ENCODE measurements at regions of chr1 and their contacts with region 1.

Region 1: DNA sequence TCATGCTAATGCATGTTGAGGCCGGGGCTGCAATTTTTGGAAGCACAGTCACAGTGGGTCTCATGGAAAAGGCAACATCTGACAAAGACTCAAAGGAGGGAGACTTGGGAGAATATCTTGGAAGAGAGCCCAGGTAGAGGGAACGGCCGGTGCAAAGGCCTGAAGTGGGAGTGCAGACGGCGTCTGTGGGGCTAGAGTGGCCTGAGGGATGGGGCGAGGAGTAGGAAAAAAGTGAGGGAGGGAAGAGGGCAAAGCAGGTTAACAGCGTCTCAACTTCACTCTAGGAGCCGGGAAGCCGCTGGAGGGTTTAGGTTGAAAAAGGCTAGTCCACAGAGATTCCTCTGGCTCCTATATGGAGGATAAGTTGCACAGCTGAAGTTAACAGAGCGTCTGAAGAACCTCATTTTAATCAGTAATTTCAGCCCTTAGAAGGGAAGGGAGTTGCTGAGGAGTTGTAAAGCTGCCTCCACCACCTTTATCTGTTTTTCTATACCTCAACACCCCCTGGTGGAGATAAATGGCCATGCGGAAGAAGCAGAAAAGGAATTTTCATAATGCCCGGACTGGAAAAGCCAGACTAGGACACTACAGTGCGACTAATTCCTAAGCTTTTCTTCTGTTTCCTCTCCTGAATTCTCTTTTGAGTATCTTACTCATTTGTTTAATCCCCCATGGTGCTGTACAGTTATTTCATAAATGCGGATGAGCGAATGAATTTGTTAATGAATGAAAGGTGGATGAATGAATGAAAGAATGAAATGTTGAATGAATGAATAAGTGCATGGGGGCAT is 78.7 kb upstream of the ZNF281 start:
- DNase-seq: peak in 3 of 4 donors; percentile 57 to 79 (median 61)
- ATAC-seq: peak; percentile 92
- H3K4me3 ChIP-seq: no peak overlapping the region
- H3K27ac ChIP-seq: peak overlapping the region in 1 of 2 donors; percentile 21
- H3K4me1 ChIP-seq: peaks cover 3 to 4% of the 10 kb centered on the region in 2 donors
- H3K27me3 ChIP-seq: no peaks in the 10 kb centered on the region
- CTCF ChIP-seq: peak; percentile 78 to 83

Region 2: GRCh38 chr1:200279810-200280411 is 208.7 kb before region 1 on chr1:
- intact Hi-C with region 1: loop called in 1 of 2 experiments (anchors 10 kb)
- DNase-seq: peak in 1 of 4 donors; percentile 40
- ATAC-seq: peak; percentile 97
- H3K4me3 ChIP-seq: no peak overlapping the region
- H3K27ac ChIP-seq: no peak overlapping the region
- H3K4me1 ChIP-seq: no peaks in the 10 kb centered on the region
- H3K27me3 ChIP-seq: no peaks in the 10 kb centered on the region
- CTCF ChIP-seq: peak; percentile 62 to 76

Measured in left lung (tissue), 14 donors.